Activated T-helper 1 cell treated with anti-CD3 and anti-CD28 coated beads, Interleukin-12 subunit alpha, Interleukin-12 subunit beta, Interleukin-2, Interleukin-4 antibody, amounts not matched to agents 30 ng/mL and 10 ng/mL and 1 ng/mL, durations not matched to agents 14 hours and 24 hours and 36 hours (primary cell): ENCODE measurements at regions of chr2 and their contacts with region 1.

Region 1: GRCh38 chr2:98608116-98608999 is at the starts of genes COA5 and UNC50:
- DNase-seq: peak; percentile 91
- H3K4me3 Mint-ChIP-seq: peak within 1 kb of the TSS; percentile 94
- H3K27ac Mint-ChIP-seq: peak within 1 kb of the TSS; percentile 94
- H3K4me1 Mint-ChIP-seq: peaks cover 65% of the 10 kb centered on the region
- H3K27me3 Mint-ChIP-seq: peaks cover 3% of the 10 kb centered on the region
- total RNA-seq, gene COA5: 20.3 and 21.2 TPM in 2 replicates
- total RNA-seq, gene UNC50: 41.4 and 43.0 TPM in 2 replicates

Region 2: GRCh38 chr2:98412751-98413458 is 195.5 kb before region 1 on chr2:
- intact Hi-C with region 1: loop called (anchors 2 kb)
- DNase-seq: peak; percentile 49
- H3K4me3 Mint-ChIP-seq: no peak overlapping the region
- H3K27ac Mint-ChIP-seq: no peak overlapping the region
- H3K4me1 Mint-ChIP-seq: peaks cover 13% of the 10 kb centered on the region
- H3K27me3 Mint-ChIP-seq: peaks cover 2% of the 10 kb centered on the region

Region 3: DNA sequence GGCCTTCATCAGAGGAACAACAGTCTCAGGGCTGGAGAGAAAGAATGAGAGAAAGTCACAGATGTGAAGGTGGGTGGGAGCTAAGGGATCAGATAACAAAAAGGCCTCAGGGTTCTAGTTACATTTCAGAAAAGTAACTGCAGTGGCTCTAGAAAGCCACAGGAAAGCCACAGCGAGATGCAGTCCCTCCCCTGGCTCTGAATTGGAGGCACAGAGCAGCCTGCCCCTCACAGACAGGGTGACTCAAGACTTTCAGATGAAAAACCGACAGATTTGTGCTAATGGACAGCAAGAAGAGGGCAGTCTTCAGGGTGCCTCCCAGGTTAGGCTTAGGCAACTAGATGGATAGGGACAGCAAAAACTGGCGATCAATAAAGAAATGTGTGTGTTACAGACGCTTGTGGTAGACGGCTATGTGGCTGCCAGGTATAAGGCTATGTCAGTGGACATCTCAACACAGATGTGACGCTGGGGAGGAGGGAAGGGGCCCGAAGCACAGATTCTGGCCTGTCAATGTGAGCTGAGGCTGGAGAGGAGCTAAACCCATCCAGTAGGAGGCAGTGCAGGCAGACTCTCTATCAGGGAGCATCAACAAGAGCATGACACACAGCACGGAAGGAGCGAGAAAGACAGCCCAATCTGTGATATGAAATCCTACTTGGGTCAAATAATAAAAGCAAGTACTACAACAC is 26.2 kb after region 1 on chr2:
- intact Hi-C with region 1: loop called (anchors 1 kb)
- DNase-seq: peak; percentile 26
- H3K4me3 Mint-ChIP-seq: peak overlapping the region; percentile 30
- H3K27ac Mint-ChIP-seq: peak overlapping the region; percentile 70
- H3K4me1 Mint-ChIP-seq: peaks cover 40% of the 10 kb centered on the region
- H3K27me3 Mint-ChIP-seq: no peaks in the 10 kb centered on the region

Region 4: GRCh38 chr2:98835831-98836385 is 227.6 kb after region 1 on chr2:
- intact Hi-C with region 1: loop called (anchors 1 kb)
- DNase-seq: peak; percentile 24
- H3K4me3 Mint-ChIP-seq: peak overlapping the region; percentile 38
- H3K27ac Mint-ChIP-seq: peak overlapping the region; percentile 56
- H3K4me1 Mint-ChIP-seq: peaks cover 53% of the 10 kb centered on the region
- H3K27me3 Mint-ChIP-seq: peaks cover 6% of the 10 kb centered on the region

Region 5: DNA sequence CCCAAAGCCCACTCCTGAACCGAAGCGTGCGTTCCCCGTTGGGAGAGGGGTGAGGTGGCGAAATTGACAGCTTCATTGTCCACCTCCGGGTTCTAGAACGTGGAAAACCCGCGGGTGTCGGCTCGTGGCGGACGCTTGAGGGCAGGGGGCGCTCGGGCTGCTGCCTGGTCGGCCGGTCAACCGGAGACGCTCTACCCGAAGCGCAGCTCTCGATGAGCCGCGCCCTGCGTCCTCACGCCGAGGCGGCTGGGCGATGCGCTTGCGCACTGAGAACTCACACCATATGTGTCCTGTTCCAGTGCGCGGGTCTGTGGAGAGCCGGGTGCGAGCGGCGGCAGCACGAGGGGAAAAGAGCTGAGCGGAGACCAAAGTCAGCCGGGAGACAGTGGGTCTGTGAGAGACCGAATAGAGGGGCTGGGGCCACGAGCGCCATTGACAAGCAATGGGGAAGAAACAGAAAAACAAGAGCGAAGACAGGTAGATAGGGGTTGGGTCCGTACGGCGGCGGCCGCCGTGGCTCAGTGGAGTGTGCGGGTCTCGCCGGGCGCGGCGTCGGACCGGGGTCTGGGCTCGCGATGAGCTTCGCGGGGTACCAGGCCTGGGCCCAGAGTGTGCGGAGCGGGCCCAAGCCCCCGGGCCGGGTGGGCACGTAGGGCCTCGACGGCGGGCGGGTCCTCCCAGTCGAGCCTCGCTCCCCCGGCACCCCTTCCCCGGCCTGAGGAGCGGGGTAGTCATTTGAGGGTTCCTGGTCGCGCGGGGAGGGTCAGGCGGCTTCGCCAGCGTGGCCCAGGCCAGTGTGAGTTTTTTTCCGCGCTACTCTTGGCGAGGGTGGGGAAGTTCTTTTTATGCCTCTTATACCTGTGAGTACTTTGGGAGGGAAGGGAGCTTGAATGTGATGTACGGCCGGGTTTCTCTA is 729.0 kb after region 1 on chr2 and contains the start of gene EIF5B:
- intact Hi-C with region 1: loop called (anchors 1 kb)
- DNase-seq: peak; percentile 93
- H3K4me3 Mint-ChIP-seq: no peak within 1 kb of the TSS
- H3K27ac Mint-ChIP-seq: no peak within 1 kb of the TSS
- H3K4me1 Mint-ChIP-seq: peaks cover 47% of the 10 kb centered on the region
- H3K27me3 Mint-ChIP-seq: no peaks in the 10 kb centered on the region
- total RNA-seq, gene EIF5B: 84.7 and 84.8 TPM in 2 replicates